ENCODE measurements at regions of chr2 and their contacts with region 1.

Region 1: GRCh38 chr2:65366595-65367125 is 65.7 kb downstream of the SPRED2 start:
- DNase-seq: peak; percentile 98
- H3K4me3 ChIP-seq: peak overlapping the region; percentile 28 to 51 (median 30)
- H3K27ac ChIP-seq: peak overlapping the region; percentile 92
- H3K4me1 ChIP-seq: peaks cover 49% of the 10 kb centered on the region
- H3K27me3 ChIP-seq: no peaks in the 10 kb centered on the region
- CTCF ChIP-seq: no peak

Region 2: GRCh38 chr2:65320042-65320725 is 46.5 kb before region 1 on chr2:
- CTCF ChIA-PET with region 1: interaction called, 4 read pairs
- dilution Hi-C with region 1: no loop called
- in situ Hi-C with region 1: no loop called
- intact Hi-C with region 1: loop called (anchors 2 kb)
- DNase-seq: peak; percentile 94
- H3K4me3 ChIP-seq: no peak overlapping the region
- H3K27ac ChIP-seq: peak overlapping the region; percentile 77
- H3K4me1 ChIP-seq: peaks cover 58% of the 10 kb centered on the region
- H3K27me3 ChIP-seq: no peaks in the 10 kb centered on the region
- CTCF ChIP-seq: peak; percentile 45 to 54

Region 3: GRCh38 chr2:65514555-65515195 is 148.0 kb after region 1 on chr2:
- CTCF ChIA-PET with region 1: interaction called, 27 read pairs
- dilution Hi-C with region 1: no loop called
- in situ Hi-C with region 1: no loop called
- intact Hi-C with region 1: no loop called
- DNase-seq: peak; percentile 38
- H3K4me3 ChIP-seq: no peak overlapping the region
- H3K27ac ChIP-seq: no peak overlapping the region
- H3K4me1 ChIP-seq: peaks cover 15% of the 10 kb centered on the region
- H3K27me3 ChIP-seq: no peaks in the 10 kb centered on the region
- CTCF ChIP-seq: no peak

Region 4: GRCh38 chr2:65566620-65567019 is 200.0 kb after region 1 on chr2:
- CTCF ChIA-PET with region 1: no interaction called
- dilution Hi-C with region 1: no loop called
- in situ Hi-C with region 1: no loop called
- intact Hi-C with region 1: loop called (anchors 5 kb)
- DNase-seq: peak; percentile 88
- H3K4me3 ChIP-seq: peak overlapping the region; percentile 43 to 67 (median 49)
- H3K27ac ChIP-seq: peak overlapping the region; percentile 96
- H3K4me1 ChIP-seq: peaks cover 19% of the 10 kb centered on the region
- H3K27me3 ChIP-seq: no peaks in the 10 kb centered on the region
- CTCF ChIP-seq: no peak